A673 (cell line): ENCODE measurements at regions of chr18 and their contacts with region 1.

Region 1: DNA sequence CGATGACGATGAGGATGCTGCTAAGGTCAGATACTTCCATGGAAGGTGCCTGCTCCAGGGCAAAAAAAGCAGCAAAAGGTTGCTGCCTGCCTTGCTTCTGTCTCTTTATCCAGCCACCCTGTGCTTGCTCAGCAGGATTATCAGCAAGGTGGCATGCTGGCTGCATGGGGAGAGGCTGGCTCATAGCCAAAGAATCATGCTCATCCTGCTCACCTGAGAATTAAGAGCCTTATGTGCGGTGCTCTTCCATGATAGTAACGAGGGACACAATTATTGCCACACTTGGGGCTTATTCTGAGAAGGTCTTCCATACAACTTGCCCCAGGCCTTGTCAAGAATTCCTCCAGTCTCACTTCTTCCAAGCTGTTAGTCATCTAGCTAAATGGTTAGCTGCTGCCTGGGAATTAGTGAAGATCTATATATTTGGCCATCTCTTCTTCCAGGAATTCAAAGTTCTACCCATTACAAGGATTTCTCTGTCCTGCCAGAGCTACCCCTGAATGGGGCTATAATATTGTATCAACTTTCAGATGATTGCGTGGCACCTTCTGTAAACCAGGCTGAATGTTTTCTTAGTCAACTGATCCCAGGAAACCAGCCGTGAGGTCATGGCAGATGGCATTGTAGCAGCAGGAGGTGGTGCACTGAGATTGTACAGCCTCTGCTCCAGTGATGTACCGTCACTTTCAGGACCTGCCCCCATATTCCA is 60.3 kb upstream of the SEC11C start:
- DNase-seq: no peak
- H3K4me3 ChIP-seq: no peak overlapping the region
- H3K27ac ChIP-seq: no peak overlapping the region
- H3K4me1 ChIP-seq: peaks cover 25% of the 10 kb centered on the region
- H3K27me3 ChIP-seq: no peaks in the 10 kb centered on the region
- CTCF ChIP-seq: no peak

Region 2: GRCh38 chr18:58991167-58991798 is 88.1 kb before region 1 on chr18:
- CTCF ChIA-PET with region 1: no interaction called
- POLR2A ChIA-PET with region 1: no interaction called
- intact Hi-C with region 1: no loop called
- DNase-seq: no peak
- H3K4me3 ChIP-seq: no peak overlapping the region
- H3K27ac ChIP-seq: peak overlapping the region; percentile 46
- H3K4me1 ChIP-seq: peaks cover 42% of the 10 kb centered on the region
- H3K27me3 ChIP-seq: no peaks in the 10 kb centered on the region
- CTCF ChIP-seq: no peak

Region 3: DNA sequence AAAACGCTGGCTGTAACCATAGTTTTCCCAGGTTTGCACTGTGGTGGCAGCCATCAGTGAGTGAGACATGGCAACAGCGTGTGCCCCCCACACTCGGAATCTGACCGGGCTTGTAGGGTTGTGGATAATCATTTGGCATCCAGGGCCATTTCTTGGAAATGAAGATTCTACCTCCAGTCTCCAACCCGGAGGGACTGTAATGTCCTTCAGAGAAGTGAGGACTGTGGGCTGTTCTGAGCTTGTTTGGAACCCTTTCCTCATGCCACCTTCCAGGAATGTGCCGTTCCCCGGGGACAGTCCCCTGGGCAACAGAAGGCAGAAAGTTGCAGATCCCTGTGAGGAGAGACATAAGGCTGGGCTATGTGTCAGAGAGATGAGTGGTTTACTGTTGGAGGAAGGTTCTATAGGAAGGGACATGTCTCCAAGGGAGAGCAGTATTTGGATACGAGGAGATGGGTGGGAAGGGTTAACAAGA is 316.7 kb after region 1 on chr18:
- CTCF ChIA-PET with region 1: interaction called, 10 read pairs
- POLR2A ChIA-PET with region 1: no interaction called
- intact Hi-C with region 1: no loop called
- DNase-seq: no peak
- H3K4me3 ChIP-seq: no peak overlapping the region
- H3K27ac ChIP-seq: no peak overlapping the region
- H3K4me1 ChIP-seq: no peaks in the 10 kb centered on the region
- H3K27me3 ChIP-seq: no peaks in the 10 kb centered on the region
- CTCF ChIP-seq: no peak